ENCODE measurements at regions of chr3 and their contacts with region 1.

Region 1: GRCh38 chr3:68017067-68017466 is 362.7 kb upstream of the SUCLG2 start:
- DNase-seq: no peak
- H3K4me3 ChIP-seq: no peak overlapping the region
- H3K4me3 Mint-ChIP-seq: no peak overlapping the region
- H3K27ac ChIP-seq: no peak overlapping the region
- H3K27ac Mint-ChIP-seq: no peak overlapping the region
- H3K4me1 ChIP-seq: no peaks in the 10 kb centered on the region
- H3K4me1 Mint-ChIP-seq: peaks cover under 1 to 5% (median under 1%) of the 10 kb centered on the region in 4 donors
- H3K27me3 ChIP-seq: no peaks in the 10 kb centered on the region
- H3K27me3 Mint-ChIP-seq: no peaks in the 10 kb centered on the region

Region 2: DNA sequence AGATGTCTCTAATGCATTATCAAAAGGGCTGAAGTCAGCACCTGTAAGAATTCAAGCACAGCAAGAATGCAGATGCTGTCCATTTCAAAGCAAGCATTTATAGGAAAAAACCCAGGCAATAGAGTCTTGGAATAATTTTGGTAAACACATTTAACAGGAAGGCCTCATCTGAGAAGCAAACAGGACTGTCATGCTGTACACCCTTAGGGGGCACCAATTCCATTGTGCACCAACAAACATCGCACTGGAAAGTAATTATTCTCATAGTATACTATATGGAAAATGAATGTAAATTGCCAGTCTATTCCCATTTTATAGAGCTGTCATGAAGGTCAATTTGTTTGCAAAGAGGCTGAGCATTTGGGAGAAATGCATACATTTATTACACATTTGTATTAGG is 115.4 kb before region 1 on chr3:
- CTCF ChIA-PET with region 1: interaction called, 4 read pairs
- POLR2A ChIA-PET with region 1: no interaction called
- intact Hi-C with region 1: loop called (anchors 5 kb)
- DNase-seq: peak in 4 of 5 donors; percentile 3 to 14 (median 10)
- H3K4me3 ChIP-seq: no peak overlapping the region
- H3K4me3 Mint-ChIP-seq: no peak overlapping the region
- H3K27ac ChIP-seq: no peak overlapping the region
- H3K27ac Mint-ChIP-seq: no peak overlapping the region
- H3K4me1 ChIP-seq: peaks cover 8% of the 10 kb centered on the region
- H3K4me1 Mint-ChIP-seq: peaks cover 6 to 8% (median 6%) of the 10 kb centered on the region in 4 donors
- H3K27me3 ChIP-seq: no peaks in the 10 kb centered on the region
- H3K27me3 Mint-ChIP-seq: no peaks in the 10 kb centered on the region

Region 3: DNA sequence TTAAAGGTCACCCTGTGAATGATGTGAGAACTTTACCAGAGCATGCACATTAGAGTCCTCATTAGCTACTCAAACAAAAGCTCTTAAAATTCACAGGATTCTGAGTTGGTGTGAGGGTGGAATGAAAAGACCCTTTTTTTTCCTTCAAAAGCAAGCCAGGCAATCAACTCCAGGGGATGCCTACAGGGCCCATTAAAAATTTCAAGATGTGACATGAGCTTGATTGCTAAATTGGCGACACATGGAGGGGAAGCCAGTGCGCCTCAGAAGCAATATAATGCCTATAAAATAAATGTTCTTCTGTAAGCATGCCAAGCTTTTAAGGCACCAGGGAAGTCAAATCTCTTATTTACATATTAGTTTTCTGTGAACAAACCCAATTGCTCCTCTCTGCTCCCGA is 33.9 kb before region 1 on chr3:
- CTCF ChIA-PET with region 1: no interaction called
- POLR2A ChIA-PET with region 1: no interaction called
- intact Hi-C with region 1: no loop called
- DNase-seq: no peak
- H3K4me3 ChIP-seq: no peak overlapping the region
- H3K4me3 Mint-ChIP-seq: no peak overlapping the region
- H3K27ac ChIP-seq: no peak overlapping the region
- H3K27ac Mint-ChIP-seq: no peak overlapping the region
- H3K4me1 ChIP-seq: no peaks in the 10 kb centered on the region
- H3K4me1 Mint-ChIP-seq: peaks cover 0 to 3% (median under 1%) of the 10 kb centered on the region in 4 donors
- H3K27me3 ChIP-seq: no peaks in the 10 kb centered on the region
- H3K27me3 Mint-ChIP-seq: no peaks in the 10 kb centered on the region

Measured in CD4-positive, alpha-beta memory T cell (primary cell).